K562 (cell line): ENCODE measurements at regions of chr12 and their contacts with region 1.

Region 1: DNA sequence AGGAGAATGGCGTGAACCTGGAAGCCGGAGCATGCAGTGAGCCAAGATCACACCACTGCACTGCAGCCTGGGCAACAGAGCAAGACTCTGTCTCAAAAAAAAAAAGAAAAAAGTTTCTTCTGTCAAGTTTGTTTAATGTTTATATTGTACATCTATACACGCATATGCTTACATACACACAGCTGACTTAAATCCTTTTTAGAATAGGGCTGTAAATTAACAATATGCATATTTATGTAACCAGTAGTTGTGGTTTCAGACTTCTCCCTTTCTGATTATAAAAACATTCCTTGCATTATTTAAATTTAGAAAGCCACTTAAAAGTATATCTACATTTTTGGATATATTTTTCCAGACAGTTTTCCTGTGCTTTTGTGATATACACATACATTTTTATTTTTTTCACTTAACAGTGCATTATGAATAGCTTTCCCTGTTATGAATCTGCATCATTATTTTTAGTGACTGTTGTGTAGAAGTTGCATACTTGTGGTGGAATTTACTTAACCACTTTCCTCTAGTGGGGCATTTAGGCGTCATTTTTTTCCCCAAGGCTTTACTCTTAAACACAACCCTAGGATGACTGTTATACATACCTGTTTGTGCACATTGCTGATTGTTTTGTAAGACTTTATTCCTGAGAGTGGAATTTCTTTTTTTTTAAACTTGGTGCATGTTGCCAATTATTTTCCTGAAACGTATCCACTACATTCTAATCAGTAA is 29.4 kb downstream of the POLR3B start:
- DNase-seq: no peak
- ATAC-seq: no peak
- H3K4me3 ChIP-seq: no peak overlapping the region
- H3K27ac ChIP-seq: no peak overlapping the region
- H3K4me1 ChIP-seq: no peaks in the 10 kb centered on the region
- H3K27me3 ChIP-seq: no peaks in the 10 kb centered on the region
- CTCF ChIP-seq: no peak
- EP300 ChIP-seq: no peak
- POLR2A ChIP-seq: no peak
- RAD21 ChIP-seq: no peak

Region 2: DNA sequence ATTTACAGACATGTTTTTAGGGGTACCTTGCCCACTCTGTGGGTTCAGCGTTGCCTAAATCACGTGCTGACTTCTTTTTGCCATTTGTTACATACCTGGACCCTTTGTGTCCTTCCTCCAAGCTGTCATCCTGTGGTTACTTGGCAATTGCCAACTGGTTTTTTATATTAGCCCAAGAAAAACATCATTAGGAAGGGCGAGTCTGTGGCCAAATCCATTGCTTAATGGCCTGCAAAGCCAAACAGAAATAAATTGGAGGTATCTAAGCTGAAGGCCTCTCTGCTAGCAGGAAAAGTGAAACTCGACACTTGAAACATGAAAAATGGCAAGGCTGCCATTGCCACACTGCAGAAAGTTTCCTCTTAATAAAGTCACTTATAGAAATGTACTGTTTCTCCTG is 438.6 kb before region 1 on chr12:
- CTCF ChIA-PET with region 1: no interaction called
- POLR2A ChIA-PET with region 1: no interaction called
- in situ Hi-C with region 1: no loop called
- intact Hi-C with region 1: no loop called
- DNase-seq: no peak
- ATAC-seq: no peak
- H3K4me3 ChIP-seq: no peak overlapping the region
- H3K27ac ChIP-seq: no peak overlapping the region
- H3K4me1 ChIP-seq: no peaks in the 10 kb centered on the region; a peak in 1 of 5 replicates
- H3K27me3 ChIP-seq: no peaks in the 10 kb centered on the region
- CTCF ChIP-seq: no peak
- EP300 ChIP-seq: no peak
- POLR2A ChIP-seq: no peak
- RAD21 ChIP-seq: no peak

Region 3: DNA sequence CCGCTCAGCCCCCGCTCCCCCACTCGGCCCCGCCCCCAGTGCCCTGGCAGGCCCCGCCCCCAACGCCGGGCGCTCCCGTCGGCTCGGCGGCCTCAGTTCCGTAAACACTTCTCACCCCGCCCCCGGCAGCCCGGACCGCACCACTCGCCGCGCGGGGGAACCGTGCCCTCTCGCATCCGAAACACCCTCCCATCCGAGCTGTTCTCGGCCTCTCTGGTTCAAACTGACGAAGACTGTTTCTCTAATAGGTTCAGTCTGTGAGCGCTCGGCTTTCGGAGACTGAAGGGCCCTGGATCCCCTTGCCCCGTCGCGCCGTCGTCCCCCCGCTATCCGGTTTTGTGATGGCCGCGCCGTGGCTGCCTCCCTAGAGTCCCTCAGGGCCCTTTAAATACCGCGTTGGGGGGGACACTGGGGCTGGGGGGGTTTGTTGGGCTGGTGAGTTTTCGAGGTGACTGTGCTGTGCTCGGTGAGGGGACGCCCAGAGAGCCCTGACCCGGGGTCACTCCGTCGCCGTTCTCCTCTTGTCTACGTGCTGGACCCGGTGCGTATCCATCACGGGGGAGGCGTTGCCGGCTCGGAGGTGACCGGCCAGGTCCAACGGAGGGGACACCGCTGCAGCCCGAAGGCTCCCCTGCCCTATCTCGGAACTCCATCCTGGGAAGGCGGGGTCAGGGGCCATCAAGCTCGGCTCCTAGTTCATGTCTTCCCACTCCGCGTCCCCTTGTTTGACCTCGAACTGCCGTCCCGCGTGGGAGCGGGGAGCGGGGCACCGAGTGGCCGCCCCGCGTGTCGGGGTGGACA is 84.4 kb before region 1 on chr12 and contains the start of gene TCP11L2:
- CTCF ChIA-PET with region 1: no interaction called
- POLR2A ChIA-PET with region 1: no interaction called
- in situ Hi-C with region 1: no loop called
- intact Hi-C with region 1: no loop called
- DNase-seq: peak; percentile 87 to 96 (median 94)
- ATAC-seq: peak; percentile 80
- H3K4me3 ChIP-seq: peak within 1 kb of the TSS; percentile 68
- H3K27ac ChIP-seq: peak within 1 kb of the TSS; percentile 96
- H3K4me1 ChIP-seq: peaks cover 19 to 30% of the 10 kb centered on the region in 2 experiments; a peak in 4 of 5 replicates
- H3K27me3 ChIP-seq: no peaks in the 10 kb centered on the region
- CTCF ChIP-seq: no peak
- EP300 ChIP-seq: no peak
- POLR2A ChIP-seq: no peak
- RAD21 ChIP-seq: no peak
- polyA plus RNA-seq, gene TCP11L2: 0.39 to 1.3 TPM

Region 4: DNA sequence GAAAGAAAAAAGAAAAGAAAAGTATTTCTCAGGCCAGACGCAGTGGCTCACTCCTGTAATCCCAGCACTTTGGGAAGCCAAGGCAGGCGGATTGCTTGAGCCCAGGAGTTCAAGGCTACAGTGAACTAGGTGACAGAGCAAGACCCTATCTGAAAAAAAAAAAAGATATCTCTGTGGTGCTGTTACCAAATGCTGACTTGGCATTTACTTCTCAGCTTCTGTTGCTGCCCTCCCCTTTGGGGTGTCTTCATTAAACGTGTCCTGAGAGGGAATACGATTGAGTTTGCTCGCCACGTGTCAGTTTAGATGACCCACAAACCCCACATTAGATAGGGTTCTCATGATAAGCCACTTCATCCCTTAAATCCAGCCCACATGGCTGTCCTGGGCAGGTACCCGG is 33.8 kb before region 1 on chr12:
- CTCF ChIA-PET with region 1: no interaction called
- POLR2A ChIA-PET with region 1: no interaction called
- in situ Hi-C with region 1: no loop called
- intact Hi-C with region 1: no loop called
- DNase-seq: no peak
- ATAC-seq: no peak
- H3K4me3 ChIP-seq: no peak overlapping the region
- H3K27ac ChIP-seq: no peak overlapping the region
- H3K4me1 ChIP-seq: peaks cover 0 to 5% of the 10 kb centered on the region in 2 experiments; a peak in 2 of 5 replicates
- H3K27me3 ChIP-seq: peaks cover 18% of the 10 kb centered on the region in 2 experiments; a peak in 4 of 5 replicates
- CTCF ChIP-seq: no peak
- EP300 ChIP-seq: no peak
- POLR2A ChIP-seq: no peak
- RAD21 ChIP-seq: no peak

Region 5: DNA sequence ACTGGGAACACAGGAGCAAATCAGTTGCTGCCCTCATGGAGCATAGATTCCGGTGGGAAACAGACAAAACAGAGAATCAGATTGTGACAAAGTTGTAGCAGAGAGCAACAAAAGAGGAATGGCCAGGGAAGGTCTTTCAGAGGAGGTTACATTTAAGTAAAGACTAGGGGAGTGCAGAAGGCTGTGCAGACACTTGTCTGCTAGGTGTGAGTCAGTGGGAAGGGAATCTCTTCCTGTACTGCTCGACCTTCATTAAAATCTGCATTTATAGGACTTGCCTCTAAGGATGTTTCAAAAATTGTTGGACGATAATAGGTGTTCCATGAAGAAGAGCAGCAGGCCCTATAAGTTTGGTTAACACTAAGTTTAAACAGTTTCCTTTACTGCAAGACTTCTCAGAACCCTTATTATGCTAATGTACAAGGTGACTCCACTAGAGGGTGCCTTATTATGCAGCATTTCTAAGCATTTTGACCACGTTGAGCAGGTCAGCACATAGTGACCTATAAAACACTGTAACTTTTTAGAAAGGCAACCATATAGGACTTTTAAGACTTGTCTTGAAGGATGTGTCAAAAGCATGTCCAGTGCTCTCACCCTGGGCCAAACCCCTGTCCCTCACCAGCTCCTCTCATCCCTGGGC is 295.7 kb after region 1 on chr12:
- CTCF ChIA-PET with region 1: no interaction called
- POLR2A ChIA-PET with region 1: no interaction called
- in situ Hi-C with region 1: no loop called
- intact Hi-C with region 1: loop called (anchors 10 kb)
- DNase-seq: peak in 2 of 4 experiments; percentile 20 to 40
- ATAC-seq: peak; percentile 82
- H3K4me3 ChIP-seq: no peak overlapping the region
- H3K27ac ChIP-seq: no peak overlapping the region
- H3K4me1 ChIP-seq: no peaks in the 10 kb centered on the region
- H3K27me3 ChIP-seq: peaks cover 4 to 20% of the 10 kb centered on the region in 2 experiments; a peak in 2 of 5 replicates
- CTCF ChIP-seq: peak; percentile 18 to 47 (median 28); a peak in 2 of 6 replicates
- EP300 ChIP-seq: no peak
- POLR2A ChIP-seq: no peak
- RAD21 ChIP-seq: peak in 1 of 2 experiments; percentile 60; a peak in 3 of 4 replicates